Prostate gland (tissue), 2 donors: ENCODE measurements at regions of chr7 and their contacts with region 1.

Region 1: DNA sequence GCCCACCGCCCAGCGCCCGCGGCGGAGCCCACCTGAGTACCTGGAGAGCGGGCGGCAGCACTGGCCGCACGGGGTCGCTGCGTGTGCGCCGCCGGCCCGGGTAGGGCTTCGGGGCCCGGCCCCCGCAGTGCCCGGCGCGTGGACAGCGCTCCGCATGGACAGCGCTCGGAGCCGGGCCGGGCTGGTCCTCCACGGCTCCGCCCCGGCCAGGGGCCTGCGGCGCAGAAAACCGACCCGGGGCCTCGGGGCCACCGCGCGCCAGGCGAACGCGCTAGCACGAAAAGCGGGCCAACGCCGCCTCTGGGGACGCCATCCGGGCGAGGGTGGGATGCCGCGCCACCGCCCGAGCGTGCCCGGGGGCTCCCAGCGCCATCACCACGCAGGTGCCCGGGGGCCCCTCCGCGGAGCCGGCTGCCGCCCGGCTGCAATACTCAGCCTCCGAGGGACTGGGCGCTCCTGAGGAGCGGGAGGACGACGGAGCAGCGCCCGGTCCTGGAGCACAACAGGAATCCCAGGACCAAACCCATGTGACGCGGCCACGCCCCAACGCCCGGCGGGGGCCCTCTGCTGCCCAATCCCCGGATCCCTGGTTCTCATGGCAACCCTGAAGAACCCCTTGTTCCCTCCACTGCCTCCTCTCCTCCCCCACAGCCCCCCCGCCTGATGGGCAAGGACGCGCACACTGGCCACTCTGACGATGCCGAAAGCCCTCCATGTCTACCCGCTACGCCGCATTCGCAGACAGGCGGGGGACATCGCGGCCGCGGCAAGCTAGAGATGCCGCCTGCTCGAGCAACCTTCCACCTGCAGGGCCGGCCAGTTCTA is at the start of gene GRB10:
- DNase-seq: no peak
- H3K4me3 ChIP-seq: peak within 1 kb of the TSS; percentile 39 to 40
- H3K27ac ChIP-seq: peak within 1 kb of the TSS; percentile 47 to 49
- H3K4me1 ChIP-seq: peaks cover 5% of the 10 kb centered on the region
- H3K27me3 ChIP-seq: no peaks in the 10 kb centered on the region
- CTCF ChIP-seq: peak in 3 of 4 experiments; percentile 8 to 39 (median 21)
- POLR2A ChIP-seq: no peak
- total RNA-seq, gene GRB10: 54.3 to 63.1 TPM

Region 2: GRCh38 chr7:51141451-51142003 is 358.9 kb after region 1 on chr7:
- intact Hi-C with region 1: loop called (anchors 10 kb)
- DNase-seq: no peak
- H3K4me3 ChIP-seq: no peak overlapping the region
- H3K27ac ChIP-seq: no peak overlapping the region
- H3K4me1 ChIP-seq: peaks cover 2% of the 10 kb centered on the region
- H3K27me3 ChIP-seq: no peaks in the 10 kb centered on the region
- CTCF ChIP-seq: peak in 3 of 4 experiments; percentile 31 to 50 (median 42)
- POLR2A ChIP-seq: no peak